ENCODE measurements at regions of chr2 and their contacts with region 1.

Region 1: DNA sequence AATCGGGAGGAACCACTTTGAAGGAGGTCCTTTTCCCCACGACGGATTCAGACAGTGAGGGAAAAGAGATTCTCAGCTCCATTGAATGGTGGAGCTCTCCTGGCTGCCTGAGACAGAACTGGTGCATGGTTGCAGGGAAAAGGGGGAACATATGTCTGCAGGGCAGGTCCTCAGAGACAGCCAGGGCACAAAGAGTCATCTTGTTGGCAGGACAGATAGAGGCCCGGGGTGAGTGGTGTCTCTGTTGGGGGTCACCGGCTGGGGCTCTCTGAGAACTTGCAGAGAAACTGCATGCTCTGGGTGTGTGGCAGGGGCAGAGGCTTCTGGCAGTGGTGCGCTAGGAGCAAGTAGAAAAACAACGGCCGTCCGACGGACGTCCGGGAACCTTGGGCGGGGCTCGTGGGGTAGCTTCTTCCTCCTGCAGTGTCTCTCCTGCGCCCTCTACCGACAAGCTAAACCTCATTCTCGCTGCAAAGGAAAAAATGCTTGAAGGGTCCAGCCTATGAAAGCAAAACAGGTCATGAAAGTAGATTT is 94.3 kb downstream of the CDCA7 start:
- DNase-seq: peak; percentile 79
- H3K4me3 Mint-ChIP-seq: peak overlapping the region; percentile 19
- H3K27ac Mint-ChIP-seq: peak overlapping the region; percentile 78
- H3K4me1 Mint-ChIP-seq: peaks cover 13% of the 10 kb centered on the region
- H3K27me3 Mint-ChIP-seq: peaks cover 29% of the 10 kb centered on the region

Region 2: DNA sequence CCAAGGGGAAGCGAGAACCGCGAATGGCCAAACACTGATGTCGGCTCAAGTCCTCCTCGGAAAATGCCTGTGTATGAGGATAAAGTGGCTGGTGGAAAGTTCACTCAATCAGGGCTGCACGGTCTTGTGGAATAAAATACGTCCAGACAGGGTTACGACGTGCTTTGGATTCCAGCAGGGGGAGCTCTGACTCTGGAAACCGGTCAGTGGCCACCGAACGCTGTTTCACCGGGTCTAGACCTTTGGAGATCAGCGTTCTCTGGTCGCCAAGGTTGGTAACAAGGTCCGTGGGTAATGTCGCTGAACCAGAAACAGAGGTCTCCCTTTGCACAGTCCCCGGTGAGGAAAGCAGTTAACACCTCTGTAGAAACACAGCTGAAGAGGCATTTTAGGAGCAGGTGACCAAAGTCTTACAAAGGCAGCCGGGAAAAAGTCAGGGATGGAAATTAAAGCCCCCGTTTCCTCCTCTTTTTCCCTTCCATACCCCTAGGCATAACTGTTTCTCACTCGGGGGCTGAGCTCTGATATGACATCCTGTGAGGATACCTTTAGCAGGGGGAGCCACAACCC is 46.5 kb before region 1 on chr2:
- CTCF ChIA-PET with region 1: interaction called, 12 read pairs
- DNase-seq: peak; percentile 82
- H3K4me3 Mint-ChIP-seq: no peak overlapping the region
- H3K27ac Mint-ChIP-seq: no peak overlapping the region
- H3K4me1 Mint-ChIP-seq: peaks cover 6% of the 10 kb centered on the region
- H3K27me3 Mint-ChIP-seq: peaks cover 50% of the 10 kb centered on the region

Region 3: GRCh38 chr2:173434762-173435360 is 14.1 kb before region 1 on chr2:
- CTCF ChIA-PET with region 1: no interaction called
- DNase-seq: no peak
- H3K4me3 Mint-ChIP-seq: no peak overlapping the region
- H3K27ac Mint-ChIP-seq: no peak overlapping the region
- H3K4me1 Mint-ChIP-seq: peaks cover 7% of the 10 kb centered on the region
- H3K27me3 Mint-ChIP-seq: peaks cover 18% of the 10 kb centered on the region

Measured in activated naive CD4-positive, alpha-beta T cell treated with anti-CD3 and anti-CD28 coated beads, Interleukin-2, amount 10 ng/mL, durations not matched to agents 7 days and 5 days (primary cell).